Activated B cell treated with CpG ODN at 0.5 μM for 24 hours (primary cell): ENCODE measurements at regions of chr6 and their contacts with region 1.

Region 1: GRCh38 chr6:36780442-36781177 is 58.6 kb downstream of the CPNE5 start:
- DNase-seq: no peak
- ATAC-seq: peak; percentile 35
- H3K4me3 Mint-ChIP-seq: peak overlapping the region; percentile 17
- H3K27ac Mint-ChIP-seq: peak overlapping the region; percentile 76
- H3K4me1 Mint-ChIP-seq: peaks cover 25% of the 10 kb centered on the region
- H3K27me3 Mint-ChIP-seq: peaks cover 10% of the 10 kb centered on the region
- CTCF ChIP-seq: no peak

Region 2: GRCh38 chr6:36851149-36851614 is 70.6 kb after region 1 on chr6:
- CTCF ChIA-PET with region 1: interaction called, 3 read pairs
- POLR2A ChIA-PET with region 1: no interaction called
- intact Hi-C with region 1: loop called (anchors 5 kb)
- DNase-seq: no peak
- ATAC-seq: no peak
- H3K4me3 Mint-ChIP-seq: no peak overlapping the region
- H3K27ac Mint-ChIP-seq: no peak overlapping the region
- H3K4me1 Mint-ChIP-seq: peaks cover 6% of the 10 kb centered on the region
- H3K27me3 Mint-ChIP-seq: peaks cover 2% of the 10 kb centered on the region
- CTCF ChIP-seq: no peak